ENCODE measurements at regions of chr1 and their contacts with region 1.

Region 1: GRCh38 chr1:227489572-227489971 is 73.8 kb upstream of the ZNF678 start:
- DNase-seq: no peak
- H3K4me3 ChIP-seq: no peak overlapping the region
- H3K27ac ChIP-seq: no peak overlapping the region
- H3K4me1 ChIP-seq: no peaks in the 10 kb centered on the region
- H3K27me3 ChIP-seq: no peaks in the 10 kb centered on the region
- CTCF ChIP-seq: no peak
- POLR2A ChIP-seq: no peak

Region 2: DNA sequence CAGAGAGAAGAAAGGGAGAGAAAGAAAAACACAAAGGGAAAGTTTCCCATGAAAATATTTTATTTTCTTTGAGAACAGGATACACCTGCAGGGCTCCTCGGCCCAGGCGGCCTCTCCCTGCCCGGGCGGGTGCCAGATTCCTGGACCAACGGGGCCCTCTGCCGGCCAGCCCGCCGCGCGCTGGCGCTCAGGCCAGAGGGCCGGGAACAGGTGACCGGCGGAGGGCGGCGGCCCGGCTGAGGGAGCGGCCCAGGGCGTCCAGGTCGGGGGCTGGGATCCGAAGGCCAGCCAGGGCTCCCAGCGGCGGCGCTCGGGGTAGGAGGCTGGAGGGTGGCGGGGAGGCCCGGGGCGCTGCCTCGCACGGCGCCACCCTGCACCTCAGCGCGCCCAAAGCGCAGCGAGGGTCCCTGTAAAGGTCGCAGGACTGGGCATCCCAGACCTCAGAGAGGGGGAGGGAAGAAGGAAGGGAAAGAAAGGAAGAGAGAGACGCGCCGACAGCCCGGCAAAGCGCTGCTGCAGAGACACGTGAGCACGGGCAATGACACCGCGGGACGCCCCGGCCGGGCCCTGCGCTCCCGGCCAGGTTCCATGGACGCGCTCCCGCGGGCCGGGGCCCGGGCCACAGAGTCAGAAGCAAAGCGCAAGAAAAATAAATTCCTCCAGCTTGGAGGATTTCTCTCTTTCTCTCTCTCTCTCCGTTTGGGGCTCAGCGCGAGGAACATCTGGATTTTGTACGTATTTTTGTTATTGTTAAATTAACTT is 457.2 kb after region 1 on chr1:
- intact Hi-C with region 1: loop called (anchors 10 kb)
- DNase-seq: peak; percentile 72 to 80
- H3K4me3 ChIP-seq: peak overlapping the region; percentile 29 to 48
- H3K27ac ChIP-seq: peak overlapping the region; percentile 73 to 83
- H3K4me1 ChIP-seq: peaks cover 0 to 13% of the 10 kb centered on the region in 2 donors
- H3K27me3 ChIP-seq: no peaks in the 10 kb centered on the region
- CTCF ChIP-seq: peak; percentile 69 to 95 (median 86)
- POLR2A ChIP-seq: peak in 1 of 2 donors; percentile 2

Measured in uterus (tissue), 4 donors.